ENCODE measurements at regions of chr6 and their contacts with region 1.

Region 1: GRCh38 chr6:19549113-19549512 is 288.1 kb upstream of the ID4 start:
- DNase-seq: no peak
- H3K4me3 Mint-ChIP-seq: no peak overlapping the region
- H3K27ac Mint-ChIP-seq: no peak overlapping the region
- H3K4me1 Mint-ChIP-seq: no peaks in the 10 kb centered on the region
- H3K27me3 Mint-ChIP-seq: no peaks in the 10 kb centered on the region
- CTCF ChIP-seq: no peak

Region 2: DNA sequence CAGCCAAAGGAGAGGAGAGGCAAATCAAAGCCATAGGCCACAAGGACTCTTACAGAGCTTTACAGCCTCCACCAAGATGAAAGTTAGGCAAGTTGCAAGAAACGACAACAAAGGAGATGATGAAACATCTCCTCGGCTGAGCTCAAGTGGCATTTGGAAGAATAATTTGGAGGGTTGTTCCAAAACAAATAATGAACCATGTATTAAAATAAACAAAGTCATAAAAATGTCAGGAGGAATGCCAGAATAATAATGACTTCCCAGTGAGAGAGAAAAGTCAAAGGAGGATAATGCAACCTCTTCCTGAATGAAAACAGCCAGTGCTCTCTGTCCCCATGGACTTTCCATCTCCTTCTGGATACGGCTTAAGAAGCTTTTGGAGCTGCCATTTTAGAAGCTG is 83.4 kb before region 1 on chr6:
- CTCF ChIA-PET with region 1: no interaction called
- intact Hi-C with region 1: no loop called
- DNase-seq: no peak
- H3K4me3 Mint-ChIP-seq: no peak overlapping the region
- H3K27ac Mint-ChIP-seq: no peak overlapping the region
- H3K4me1 Mint-ChIP-seq: no peaks in the 10 kb centered on the region
- H3K27me3 Mint-ChIP-seq: no peaks in the 10 kb centered on the region
- CTCF ChIP-seq: no peak

Region 3: GRCh38 chr6:19530188-19530587 is 18.9 kb before region 1 on chr6:
- CTCF ChIA-PET with region 1: no interaction called
- intact Hi-C with region 1: no loop called
- DNase-seq: no peak
- H3K4me3 Mint-ChIP-seq: no peak overlapping the region
- H3K27ac Mint-ChIP-seq: no peak overlapping the region
- H3K4me1 Mint-ChIP-seq: no peaks in the 10 kb centered on the region
- H3K27me3 Mint-ChIP-seq: no peaks in the 10 kb centered on the region
- CTCF ChIP-seq: no peak

Region 4: DNA sequence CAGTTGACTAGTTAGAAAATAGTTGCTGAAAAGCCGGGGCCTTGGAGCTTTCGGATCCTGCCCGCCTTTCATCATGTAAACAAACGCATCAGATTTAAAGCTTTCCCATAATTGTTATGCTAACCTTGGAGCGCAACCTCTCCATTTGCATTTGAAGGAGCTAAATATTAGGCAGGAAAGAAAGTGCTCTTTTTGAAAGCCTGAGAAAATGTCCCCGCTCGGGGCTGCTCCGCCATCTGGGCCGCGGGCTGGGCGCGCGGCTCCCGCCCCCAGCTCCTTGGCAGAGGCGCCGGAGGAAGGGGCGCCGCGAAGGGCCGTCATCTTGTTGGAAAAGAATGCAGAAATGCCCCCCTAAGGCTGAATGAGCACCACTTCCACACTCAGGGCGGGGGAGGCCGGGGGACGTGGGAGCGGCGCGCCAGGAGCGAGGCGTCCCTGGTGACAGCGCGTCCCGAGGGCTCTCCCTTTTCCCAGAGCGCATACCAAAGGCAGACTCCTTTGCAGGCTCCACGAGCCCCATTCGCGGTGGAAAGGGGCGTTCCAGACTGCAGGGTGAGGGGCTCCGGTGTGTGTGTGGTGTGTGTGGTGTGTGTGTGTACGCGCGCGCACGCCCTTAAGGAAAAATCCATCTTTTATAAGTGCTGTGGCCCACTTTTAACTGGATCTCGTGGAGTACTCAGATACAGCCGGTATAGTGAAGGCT is 142.5 kb after region 1 on chr6:
- CTCF ChIA-PET with region 1: no interaction called
- intact Hi-C with region 1: no loop called
- DNase-seq: no peak
- H3K4me3 Mint-ChIP-seq: no peak overlapping the region
- H3K27ac Mint-ChIP-seq: no peak overlapping the region
- H3K4me1 Mint-ChIP-seq: no peaks in the 10 kb centered on the region
- H3K27me3 Mint-ChIP-seq: no peaks in the 10 kb centered on the region
- CTCF ChIP-seq: no peak

Region 5: DNA sequence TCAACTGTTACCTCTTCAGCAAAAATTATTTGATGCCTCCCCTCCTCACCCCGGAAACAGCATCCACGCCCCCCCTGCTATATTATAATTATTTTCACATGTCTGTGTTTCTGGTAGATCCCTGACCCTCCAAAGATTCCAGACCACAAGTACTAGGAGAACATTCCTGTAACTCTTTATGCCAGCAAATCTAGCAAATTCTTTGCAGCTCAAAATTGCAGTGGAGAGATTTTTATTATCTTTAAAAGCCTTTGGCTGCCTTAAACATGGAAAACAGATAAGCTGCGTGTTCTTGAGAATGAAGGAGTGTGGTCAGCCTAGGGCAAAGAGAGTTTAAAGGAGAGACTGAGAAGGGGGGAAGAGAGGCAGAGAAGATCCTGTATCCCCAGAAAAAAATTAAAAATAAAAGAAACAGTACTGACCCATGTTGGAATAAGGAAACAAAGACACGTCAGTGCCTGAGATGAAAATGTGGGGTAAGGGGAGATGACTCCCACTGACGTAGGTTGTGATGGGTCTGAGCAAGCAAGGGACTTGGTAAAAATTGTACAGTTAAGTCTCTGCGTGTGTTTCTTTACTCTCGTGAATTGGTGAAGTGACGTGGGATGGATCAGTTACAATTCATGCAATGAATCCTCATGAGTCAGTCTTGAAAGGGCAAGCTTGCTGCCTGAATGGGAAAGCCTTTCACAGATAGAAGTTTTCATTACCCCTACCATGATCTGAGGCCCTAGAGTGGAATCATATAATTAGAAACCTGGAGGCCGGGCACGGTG is 296.3 kb after region 1 on chr6:
- CTCF ChIA-PET with region 1: no interaction called
- intact Hi-C with region 1: loop called (anchors 10 kb)
- DNase-seq: no peak
- H3K4me3 Mint-ChIP-seq: no peak overlapping the region
- H3K27ac Mint-ChIP-seq: no peak overlapping the region
- H3K4me1 Mint-ChIP-seq: no peaks in the 10 kb centered on the region
- H3K27me3 Mint-ChIP-seq: no peaks in the 10 kb centered on the region
- CTCF ChIP-seq: no peak

Measured in Calu3 (cell line).